ENCODE measurements at regions of chrX and their contacts with region 1.

Region 1: DNA sequence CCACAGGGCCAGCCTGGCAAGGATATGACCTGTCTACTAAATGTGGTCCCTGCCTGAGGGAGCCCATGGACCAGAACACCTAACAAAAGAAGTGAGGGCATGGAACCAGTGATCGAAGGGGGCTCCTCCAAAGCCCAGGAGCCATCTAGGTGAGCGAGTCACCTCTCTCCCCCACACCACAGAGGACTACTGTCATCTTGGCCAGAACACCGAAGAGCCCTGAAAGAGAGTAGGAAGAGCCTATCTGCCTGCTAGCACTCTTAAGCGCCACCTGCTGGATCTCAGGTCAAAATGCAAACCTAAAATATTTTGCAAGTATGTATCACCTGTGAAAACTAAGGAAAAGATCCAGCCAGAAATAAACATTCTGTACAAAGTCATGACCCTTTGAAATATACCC is 137.9 kb upstream of the ZXDB start:
- DNase-seq: peak; percentile 31
- H3K4me3 Mint-ChIP-seq: no peak overlapping the region
- H3K27ac Mint-ChIP-seq: no peak overlapping the region
- H3K4me1 Mint-ChIP-seq: no peaks in the 10 kb centered on the region
- H3K27me3 Mint-ChIP-seq: no peaks in the 10 kb centered on the region

Region 2: GRCh38 chrX:57282568-57282967 is 171.3 kb before region 1 on chrX:
- CTCF ChIA-PET with region 1: interaction called, 12 read pairs
- DNase-seq: peak; percentile 22
- H3K4me3 Mint-ChIP-seq: no peak overlapping the region
- H3K27ac Mint-ChIP-seq: no peak overlapping the region
- H3K4me1 Mint-ChIP-seq: peaks cover 26% of the 10 kb centered on the region
- H3K27me3 Mint-ChIP-seq: no peaks in the 10 kb centered on the region

Measured in activated naive CD4-positive, alpha-beta T cell treated with anti-CD3 and anti-CD28 coated beads, Interleukin-2, amount 10 ng/mL, durations not matched to agents 7 days and 5 days (primary cell).